OCI-LY7 (cell line): ENCODE measurements at regions of chr2 and their contacts with region 1.

Region 1: DNA sequence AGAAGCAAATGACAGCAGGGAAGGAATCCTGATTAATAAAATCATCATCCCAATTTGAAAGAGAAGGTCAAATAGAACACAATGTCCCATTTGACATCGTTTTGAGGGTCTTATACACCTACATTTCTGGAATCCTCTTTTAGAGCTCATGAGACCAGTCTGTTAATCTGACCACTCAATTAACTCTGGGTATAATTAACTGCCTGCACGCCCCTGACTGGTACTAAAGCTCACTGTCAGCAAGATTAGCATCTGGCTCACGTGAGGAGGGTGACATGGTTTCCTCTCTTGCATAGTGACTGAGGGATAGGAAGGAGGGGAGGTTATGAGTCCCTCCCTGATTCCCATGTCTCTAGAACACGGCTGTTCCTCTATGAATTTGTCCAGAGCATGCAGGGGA is 124.3 kb downstream of the ICOS start:
- DNase-seq: no peak
- H3K4me3 ChIP-seq: no peak overlapping the region
- H3K27ac ChIP-seq: no peak overlapping the region
- H3K4me1 ChIP-seq: no peaks in the 10 kb centered on the region
- CTCF ChIP-seq: no peak

Region 2: DNA sequence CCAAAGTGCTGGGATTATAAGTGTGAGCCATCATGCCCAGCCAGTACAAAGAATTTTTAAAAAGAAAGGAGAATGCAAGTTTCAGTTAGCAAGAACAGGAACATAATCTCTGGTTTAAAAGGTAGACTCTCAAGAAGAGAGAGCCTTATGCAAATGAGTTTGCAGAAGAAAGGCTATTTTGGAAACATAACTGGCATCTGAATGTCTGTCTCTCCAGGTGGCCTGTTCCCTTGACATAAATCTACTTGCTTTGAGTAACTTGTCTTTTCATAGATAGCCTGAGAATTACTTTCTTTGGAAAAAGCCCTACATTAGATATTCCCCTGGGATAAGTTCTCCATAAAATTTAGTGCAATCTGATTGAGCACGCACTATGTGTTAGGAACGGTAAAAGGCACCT is 14.7 kb before region 1 on chr2:
- CTCF ChIA-PET with region 1: interaction called, 4 read pairs
- POLR2A ChIA-PET with region 1: interaction called, 11 read pairs
- intact Hi-C with region 1: no loop called
- DNase-seq: peak; percentile 82
- H3K4me3 ChIP-seq: peak overlapping the region; percentile 45
- H3K27ac ChIP-seq: peak overlapping the region; percentile 87
- H3K4me1 ChIP-seq: peaks cover 58% of the 10 kb centered on the region
- CTCF ChIP-seq: no peak